RWPE1 (cell line): ENCODE measurements at regions of chr18 and their contacts with region 1.

Region 1: DNA sequence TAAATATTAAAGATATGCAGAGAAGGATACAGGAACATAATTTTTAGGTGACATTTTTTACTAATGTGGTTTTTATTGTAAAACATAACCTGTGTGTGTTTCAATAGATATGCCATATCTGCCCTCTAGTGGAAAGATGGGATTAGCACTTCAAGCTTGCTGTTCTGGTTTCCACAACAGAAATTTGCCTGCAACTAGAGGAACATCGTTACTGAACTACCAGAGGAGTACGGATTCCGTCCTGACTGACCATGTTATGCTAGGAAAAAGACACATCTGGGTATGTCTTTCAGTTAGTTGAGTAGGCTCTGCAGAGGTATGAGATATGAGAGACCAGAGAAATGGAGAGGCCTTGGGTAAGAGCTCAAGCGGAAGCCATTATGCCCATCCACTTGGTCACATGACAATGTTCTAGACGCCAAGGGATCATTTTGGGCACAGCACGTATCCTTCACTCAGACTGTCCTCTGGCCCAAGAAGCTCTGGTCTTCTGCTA is 104.9 kb downstream of the MBD2 start:
- DNase-seq: peak; percentile 20
- H3K27ac ChIP-seq: no peak overlapping the region
- CTCF ChIP-seq: peak; percentile 82

Region 2: GRCh38 chr18:53698907-53699306 is 420.7 kb before region 1 on chr18:
- CTCF ChIA-PET with region 1: interaction called, 10 read pairs
- POLR2A ChIA-PET with region 1: no interaction called
- DNase-seq: peak; percentile 14
- H3K27ac ChIP-seq: no peak overlapping the region
- CTCF ChIP-seq: peak; percentile 27; the same call in 1 of the 2 replicates

Region 3: GRCh38 chr18:54100920-54101470 is 18.6 kb before region 1 on chr18:
- CTCF ChIA-PET with region 1: no interaction called
- POLR2A ChIA-PET with region 1: no interaction called
- DNase-seq: no peak
- H3K27ac ChIP-seq: no peak overlapping the region
- CTCF ChIP-seq: no peak